PC-9 (cell line): ENCODE measurements at regions of chr19 and their contacts with region 1.

Region 1: DNA sequence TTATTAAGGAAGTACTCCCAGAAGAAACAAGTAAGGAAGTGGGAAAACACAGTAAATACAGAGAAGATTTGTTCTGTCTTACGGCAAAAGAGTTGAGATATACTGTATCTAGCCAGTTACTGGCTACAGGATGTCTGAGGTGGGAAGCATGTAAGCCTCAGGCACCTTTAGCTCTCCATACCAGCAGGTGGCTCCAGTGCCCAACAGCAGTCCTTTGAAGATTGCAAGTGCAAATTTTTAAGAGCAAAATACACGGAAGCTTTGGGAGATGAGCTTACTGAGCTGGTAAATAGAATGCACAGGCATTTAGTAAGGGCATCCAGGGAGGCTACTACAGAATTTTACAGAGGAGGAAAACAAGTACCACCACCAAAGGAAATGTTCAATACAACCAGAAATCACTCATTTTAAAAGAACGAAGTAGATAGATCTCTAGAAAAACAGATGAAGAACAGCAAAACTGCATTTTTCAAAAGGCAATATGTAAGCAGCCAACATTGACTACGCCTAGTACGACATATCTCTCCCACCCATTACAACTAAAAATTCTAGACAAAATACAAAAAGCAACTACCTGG is 57.9 kb upstream of the VSTM2B start:
- DNase-seq: peak; percentile 20 to 48
- H3K4me3 ChIP-seq: no peak overlapping the region
- H3K27ac ChIP-seq: no peak overlapping the region
- H3K4me1 ChIP-seq: no peaks in the 10 kb centered on the region
- H3K27me3 ChIP-seq: peaks cover 9% of the 10 kb centered on the region; the same call in 1 of the 2 replicates
- CTCF ChIP-seq: peak; percentile 63

Region 2: DNA sequence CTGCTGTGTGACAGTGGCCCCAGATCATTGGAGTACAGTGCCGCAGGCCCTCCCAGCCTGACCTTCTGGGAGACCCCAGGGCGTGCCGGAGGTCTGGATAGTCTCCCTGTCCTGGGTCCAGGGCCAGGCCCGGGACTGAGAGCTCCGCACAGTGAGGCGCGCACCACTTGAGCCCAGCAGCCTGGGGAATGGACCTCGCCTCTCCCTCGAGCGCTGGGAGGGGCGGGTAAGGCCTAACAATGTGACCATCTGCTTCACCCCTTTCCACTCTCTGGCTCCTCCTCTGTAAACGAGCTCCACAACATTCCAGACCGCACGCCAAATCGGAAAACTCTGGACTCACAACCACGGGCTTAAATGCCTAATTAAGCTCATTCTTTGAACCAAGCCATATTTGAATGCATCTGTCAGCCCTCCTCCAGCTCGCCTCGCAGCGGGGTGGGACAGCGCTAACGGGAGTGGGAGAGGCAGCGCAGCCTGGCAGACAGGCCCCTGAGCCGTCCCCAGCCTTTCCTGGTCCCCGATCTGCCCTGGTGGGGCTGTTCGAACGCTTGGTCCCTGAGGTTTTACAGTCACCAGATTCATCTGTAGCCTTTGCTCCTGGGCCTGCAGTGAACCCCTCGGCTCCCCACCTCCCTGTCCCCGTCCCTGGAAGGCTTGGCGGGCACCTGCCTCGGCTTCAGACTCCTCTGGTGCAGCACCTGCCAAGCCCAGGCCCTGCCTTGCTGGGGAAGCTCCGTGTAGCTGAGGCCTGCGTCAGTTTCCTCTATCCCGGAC is 62.8 kb before region 1 on chr19:
- CTCF ChIA-PET with region 1: no interaction called
- POLR2A ChIA-PET with region 1: no interaction called
- intact Hi-C with region 1: no loop called
- DNase-seq: peak; percentile 18 to 37
- H3K4me3 ChIP-seq: no peak overlapping the region
- H3K27ac ChIP-seq: no peak overlapping the region
- H3K4me1 ChIP-seq: no peaks in the 10 kb centered on the region
- H3K27me3 ChIP-seq: peaks cover 93% of the 10 kb centered on the region
- CTCF ChIP-seq: no peak

Region 3: DNA sequence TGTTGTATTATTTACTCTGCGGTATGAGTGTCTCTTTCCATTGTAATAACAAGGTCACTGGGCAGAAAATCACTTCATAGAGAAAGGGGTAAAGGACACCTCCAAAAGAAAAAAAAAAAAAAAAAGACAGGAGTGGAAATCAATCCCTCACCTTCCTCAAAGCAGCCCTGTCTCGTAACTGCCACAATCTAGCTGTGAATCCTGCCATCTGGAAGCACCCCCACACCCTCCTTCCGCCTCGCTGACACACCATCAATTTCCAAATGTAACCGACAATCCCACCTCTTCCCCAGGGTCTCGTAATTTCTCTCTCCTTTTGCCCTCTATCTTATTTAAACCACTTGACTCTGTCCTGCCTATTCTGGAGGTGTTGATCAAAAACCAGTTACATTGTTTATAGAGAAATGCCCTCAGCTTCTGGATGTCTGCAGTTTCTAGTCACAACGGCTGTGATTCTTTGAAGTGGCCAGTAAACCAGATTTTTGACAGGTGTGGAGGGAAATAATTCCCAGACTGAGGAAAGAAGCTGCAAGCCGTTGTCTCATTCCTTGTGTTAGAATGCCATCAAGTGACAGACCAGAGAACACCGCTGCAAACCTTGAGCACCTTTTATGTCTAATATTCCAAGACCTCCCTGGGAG is 129.1 kb after region 1 on chr19:
- CTCF ChIA-PET with region 1: no interaction called
- POLR2A ChIA-PET with region 1: no interaction called
- intact Hi-C with region 1: loop called (anchors 5 kb)
- DNase-seq: no peak
- H3K4me3 ChIP-seq: no peak overlapping the region
- H3K27ac ChIP-seq: no peak overlapping the region
- H3K4me1 ChIP-seq: no peaks in the 10 kb centered on the region
- H3K27me3 ChIP-seq: peaks cover 84% of the 10 kb centered on the region
- CTCF ChIP-seq: peak; percentile 54

Region 4: DNA sequence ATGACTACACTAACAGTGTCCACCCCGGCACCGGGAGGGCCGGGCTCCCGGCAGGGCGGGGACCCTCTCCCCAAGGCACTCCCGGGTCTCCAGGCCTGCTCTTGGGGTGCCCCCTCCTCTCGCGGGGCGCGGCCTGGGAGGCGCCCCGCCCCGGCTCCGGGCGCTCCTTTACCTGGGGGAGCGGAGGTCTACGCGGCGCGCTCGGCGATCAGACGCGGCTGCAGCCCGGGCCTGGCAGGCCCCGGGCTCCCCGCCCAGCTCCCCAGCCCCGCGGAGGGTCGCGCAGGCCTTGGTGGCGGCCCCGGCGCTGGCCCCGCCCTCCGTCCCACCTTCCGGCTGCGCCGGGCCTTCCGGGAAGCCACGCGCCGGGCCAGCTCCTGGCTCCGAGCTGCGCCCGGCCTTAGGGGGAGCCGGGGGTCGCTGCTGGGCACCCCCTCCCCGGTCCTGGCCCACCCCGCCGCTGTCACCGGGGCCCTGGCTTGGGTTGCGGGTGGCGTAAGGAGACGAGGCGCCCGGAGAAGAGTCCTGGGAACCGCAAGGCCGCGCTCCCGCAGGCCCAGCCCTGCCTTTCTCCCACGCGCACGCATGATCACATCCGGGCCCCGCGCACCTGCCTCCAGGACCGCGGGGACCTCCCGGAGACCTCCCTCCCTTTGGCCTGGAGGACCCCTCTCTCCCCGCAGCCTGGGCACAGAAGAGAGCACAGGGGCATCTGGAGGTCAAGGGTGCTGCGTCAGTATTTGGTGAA is 247.2 kb after region 1 on chr19 and contains the start of gene C19orf12:
- CTCF ChIA-PET with region 1: no interaction called
- POLR2A ChIA-PET with region 1: no interaction called
- intact Hi-C with region 1: loop called (anchors 5 kb)
- DNase-seq: peak in 1 of 2 experiments; percentile 62
- H3K4me3 ChIP-seq: peak within 1 kb of the TSS; percentile 92
- H3K27ac ChIP-seq: peak within 1 kb of the TSS; percentile 66
- H3K4me1 ChIP-seq: peaks cover 7% of the 10 kb centered on the region
- H3K27me3 ChIP-seq: no peaks in the 10 kb centered on the region
- CTCF ChIP-seq: no peak
- total RNA-seq, gene C19orf12: 14.8 and 15.4 TPM in 2 replicates

Region 5: DNA sequence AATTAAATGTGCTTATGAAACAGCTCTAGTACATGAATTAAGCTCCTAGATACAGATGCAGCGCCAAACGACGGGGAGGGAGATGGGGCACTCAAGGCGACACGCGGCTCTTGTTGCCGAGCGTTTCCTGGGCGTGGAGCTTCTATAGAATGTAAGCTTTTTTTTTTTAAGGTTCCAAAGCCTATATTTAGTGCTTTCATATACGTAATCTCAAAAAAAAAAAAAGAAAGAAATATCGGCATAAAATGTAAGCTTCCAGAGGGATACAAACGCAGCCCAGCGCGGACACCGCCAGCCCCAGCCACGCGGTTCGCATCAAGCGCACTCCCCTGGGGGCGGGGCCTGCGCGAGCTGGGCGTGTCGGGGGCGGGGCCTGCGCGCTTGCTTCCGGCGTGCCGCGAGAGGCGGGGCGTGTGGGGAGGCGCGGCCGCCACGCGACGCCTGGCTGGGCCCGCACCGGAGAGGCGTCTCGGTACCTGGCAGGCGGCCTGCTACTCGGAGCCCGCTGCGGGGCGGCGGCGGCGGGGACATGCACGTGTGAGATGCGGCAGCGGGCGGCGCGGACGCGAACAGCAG is 474.0 kb after region 1 on chr19 and contains the start of gene URI1:
- CTCF ChIA-PET with region 1: no interaction called
- POLR2A ChIA-PET with region 1: interaction called, 12 read pairs
- intact Hi-C with region 1: no loop called
- DNase-seq: peak; percentile 59 to 91
- H3K4me3 ChIP-seq: peak within 1 kb of the TSS; percentile 98
- H3K27ac ChIP-seq: peak within 1 kb of the TSS; percentile 35
- H3K4me1 ChIP-seq: peaks cover 33% of the 10 kb centered on the region
- H3K27me3 ChIP-seq: no peaks in the 10 kb centered on the region
- CTCF ChIP-seq: no peak
- total RNA-seq, gene URI1: 52.4 and 56.0 TPM in 2 replicates